OCI-LY7 (cell line): ENCODE measurements at regions of chr6 and their contacts with region 1.

Region 1: GRCh38 chr6:156752666-156753301 is 24.4 kb upstream of the ARID1B start:
- DNase-seq: peak; percentile 78
- H3K4me3 ChIP-seq: peak overlapping the region; percentile 43
- H3K27ac ChIP-seq: peak overlapping the region; percentile 77
- H3K4me1 ChIP-seq: peaks cover 68% of the 10 kb centered on the region
- CTCF ChIP-seq: peak; percentile 82

Region 2: GRCh38 chr6:154962753-154963152 is 1790.0 kb before region 1 on chr6:
- CTCF ChIA-PET with region 1: no interaction called
- POLR2A ChIA-PET with region 1: no interaction called
- intact Hi-C with region 1: no loop called
- DNase-seq: no peak
- H3K4me3 ChIP-seq: no peak overlapping the region
- H3K27ac ChIP-seq: no peak overlapping the region
- H3K4me1 ChIP-seq: no peaks in the 10 kb centered on the region
- CTCF ChIP-seq: no peak

Region 3: GRCh38 chr6:156279261-156279969 is 473.4 kb before region 1 on chr6:
- CTCF ChIA-PET with region 1: no interaction called
- POLR2A ChIA-PET with region 1: no interaction called
- intact Hi-C with region 1: loop called (anchors 10 kb)
- DNase-seq: peak; percentile 98
- H3K4me3 ChIP-seq: peak overlapping the region; percentile 61
- H3K27ac ChIP-seq: peak overlapping the region; percentile 96
- H3K4me1 ChIP-seq: peaks cover 61% of the 10 kb centered on the region
- CTCF ChIP-seq: no peak

Region 4: DNA sequence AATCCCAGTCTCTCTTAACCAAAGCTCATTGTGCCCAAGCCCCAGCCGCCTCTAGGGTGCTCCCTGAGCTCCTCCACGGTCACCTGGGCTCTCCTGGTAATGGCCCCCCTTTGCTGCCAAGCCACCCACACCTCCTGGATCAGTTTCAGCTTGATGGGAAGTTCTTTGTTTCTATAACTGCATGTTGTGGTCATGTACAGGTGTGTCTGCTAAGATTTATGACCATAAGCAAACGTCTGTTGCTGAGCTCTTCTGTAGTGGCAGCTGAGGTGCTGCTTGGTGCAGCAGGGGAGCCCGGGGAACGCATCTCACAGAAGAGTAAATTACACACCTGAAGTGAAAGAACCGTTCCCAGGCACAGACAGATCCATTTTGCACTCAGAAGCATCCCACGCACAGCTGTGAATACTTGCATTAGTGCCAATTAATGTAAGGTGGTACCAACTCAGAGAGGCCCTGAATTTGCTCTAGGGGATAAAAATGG is 170.2 kb before region 1 on chr6:
- CTCF ChIA-PET with region 1: no interaction called
- POLR2A ChIA-PET with region 1: interaction called, 4 read pairs
- intact Hi-C with region 1: loop called (anchors 5 kb)
- DNase-seq: peak; percentile 89
- H3K4me3 ChIP-seq: peak overlapping the region; percentile 33
- H3K27ac ChIP-seq: peak overlapping the region; percentile 84
- H3K4me1 ChIP-seq: peaks cover 23% of the 10 kb centered on the region
- CTCF ChIP-seq: peak; percentile 59

Region 5: GRCh38 chr6:156634951-156635371 is 117.8 kb before region 1 on chr6:
- CTCF ChIA-PET with region 1: interaction called, 3 read pairs
- POLR2A ChIA-PET with region 1: interaction called, 7 read pairs
- intact Hi-C with region 1: loop called (anchors 1 kb)
- DNase-seq: peak; percentile 25
- H3K4me3 ChIP-seq: no peak overlapping the region
- H3K27ac ChIP-seq: peak overlapping the region; percentile 90
- H3K4me1 ChIP-seq: peaks cover 51% of the 10 kb centered on the region
- CTCF ChIP-seq: no peak

Region 6: DNA sequence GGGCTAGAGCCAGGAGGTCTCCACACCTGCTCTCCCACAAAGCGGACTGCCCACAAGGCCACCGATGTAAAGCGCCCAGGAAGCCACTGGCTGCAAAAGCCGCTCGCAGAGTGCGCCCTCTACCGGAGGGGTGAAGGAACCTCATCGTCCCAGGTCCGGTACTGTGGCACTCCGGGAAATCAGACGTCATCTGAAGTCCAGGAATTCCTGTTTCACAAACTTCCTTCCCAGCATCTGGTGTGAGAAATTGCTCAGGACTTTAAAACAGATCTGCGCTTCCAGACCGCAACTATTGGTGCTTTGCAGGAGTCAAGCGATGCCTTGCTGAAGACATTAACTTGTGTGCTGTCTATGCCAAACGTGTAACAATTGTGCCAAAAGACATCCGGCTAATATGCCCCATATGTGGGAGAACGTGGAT is 90.7 kb before region 1 on chr6:
- CTCF ChIA-PET with region 1: no interaction called
- POLR2A ChIA-PET with region 1: no interaction called
- intact Hi-C with region 1: no loop called
- DNase-seq: peak; percentile 37
- H3K4me3 ChIP-seq: no peak overlapping the region
- H3K27ac ChIP-seq: no peak overlapping the region
- H3K4me1 ChIP-seq: peaks cover 14% of the 10 kb centered on the region
- CTCF ChIP-seq: peak; percentile 84

Region 7: GRCh38 chr6:156686995-156687788 is 65.6 kb before region 1 on chr6:
- CTCF ChIA-PET with region 1: no interaction called
- POLR2A ChIA-PET with region 1: interaction called, 11 read pairs
- intact Hi-C with region 1: loop called (anchors 2 kb)
- DNase-seq: peak; percentile 89
- H3K4me3 ChIP-seq: peak overlapping the region; percentile 73
- H3K27ac ChIP-seq: peak overlapping the region; percentile 92
- H3K4me1 ChIP-seq: peaks cover 57% of the 10 kb centered on the region
- CTCF ChIP-seq: no peak

Region 8: GRCh38 chr6:156719720-156720563 is 32.8 kb before region 1 on chr6:
- CTCF ChIA-PET with region 1: interaction called, 4 read pairs
- POLR2A ChIA-PET with region 1: interaction called, 10 read pairs
- intact Hi-C with region 1: loop called (anchors 1 kb)
- DNase-seq: peak; percentile 64
- H3K4me3 ChIP-seq: peak overlapping the region; percentile 42
- H3K27ac ChIP-seq: peak overlapping the region; percentile 45
- H3K4me1 ChIP-seq: peaks cover 28% of the 10 kb centered on the region
- CTCF ChIP-seq: no peak

Region 9: GRCh38 chr6:156767603-156768467 is 15.1 kb after region 1 on chr6:
- CTCF ChIA-PET with region 1: no interaction called
- POLR2A ChIA-PET with region 1: interaction called, 19 read pairs
- intact Hi-C with region 1: no loop called
- DNase-seq: peak; percentile 80
- H3K4me3 ChIP-seq: no peak overlapping the region
- H3K27ac ChIP-seq: no peak overlapping the region
- H3K4me1 ChIP-seq: peaks cover 26% of the 10 kb centered on the region
- CTCF ChIP-seq: no peak; the same call in 1 of the 2 replicates